ENCODE measurements at regions of chr12 and their contacts with region 1.

Region 1: DNA sequence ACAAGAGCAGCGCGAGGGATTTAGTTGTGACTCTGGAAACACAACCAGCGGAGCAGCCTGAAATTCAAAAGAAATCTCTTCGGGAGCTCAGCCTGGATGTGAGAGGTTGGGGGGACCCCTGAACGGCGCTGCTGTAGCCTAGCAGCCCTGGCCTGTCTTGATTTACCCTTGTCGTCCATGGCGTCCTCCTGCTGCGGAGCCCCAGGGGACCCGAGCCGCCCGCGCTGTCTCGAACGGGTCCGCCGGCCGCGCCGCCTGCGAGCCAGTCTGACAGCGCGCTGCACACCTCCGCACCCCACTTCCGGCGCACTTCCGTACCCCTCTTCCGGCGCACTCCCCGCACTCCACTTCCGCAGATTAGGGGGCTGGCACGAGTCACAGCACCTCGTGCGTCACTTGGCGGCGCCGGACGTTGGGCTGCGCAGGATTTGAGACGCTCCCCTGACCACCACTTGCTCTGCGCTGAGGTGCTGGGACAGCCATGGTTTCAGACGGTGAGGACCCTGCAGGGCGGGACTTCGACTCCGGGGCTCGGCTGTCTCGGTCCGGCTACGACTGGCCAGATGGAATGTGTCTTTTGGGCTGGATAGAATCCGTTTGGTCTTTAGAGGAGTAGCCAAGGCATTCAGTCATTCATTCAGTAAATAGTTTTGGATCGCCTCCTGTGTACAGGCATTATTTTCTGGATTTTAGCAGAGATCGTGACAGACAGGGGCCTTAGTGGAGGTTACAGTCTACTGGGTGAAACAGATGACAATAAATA is at the starts of genes EIF2B1 and GTF2H3:
- DNase-seq: peak; percentile 92 to 98 (median 95)
- ATAC-seq: peak; percentile 94
- H3K4me3 ChIP-seq: peak within 1 kb of the TSS; percentile 88
- H3K4me3 Mint-ChIP-seq: peak within 1 kb of the TSS; percentile 98
- H3K27ac ChIP-seq: peak within 1 kb of the TSS; percentile 81 to 92
- H3K27ac Mint-ChIP-seq: peak within 1 kb of the TSS; percentile 97
- H3K4me1 ChIP-seq: peaks cover 26% of the 10 kb centered on the region
- H3K4me1 Mint-ChIP-seq: peaks cover 23% of the 10 kb centered on the region
- H3K27me3 ChIP-seq: no peaks in the 10 kb centered on the region
- H3K27me3 Mint-ChIP-seq: no peaks in the 10 kb centered on the region
- CTCF ChIP-seq: no peak
- total RNA-seq, gene EIF2B1: 36.0 to 37.3 TPM
- total RNA-seq, gene GTF2H3: 12.3 to 12.9 TPM

Region 2: GRCh38 chr12:123601602-123602489 is 31.7 kb before region 1 on chr12 and contains the start of gene DDX55:
- CTCF ChIA-PET with region 1: no interaction called
- POLR2A ChIA-PET with region 1: interaction called, 20 read pairs
- intact Hi-C with region 1: loop called (anchors 1 kb)
- DNase-seq: peak; percentile 78 to 95 (median 84)
- ATAC-seq: peak; percentile 93
- H3K4me3 ChIP-seq: peak within 1 kb of the TSS; percentile 98
- H3K4me3 Mint-ChIP-seq: peak within 1 kb of the TSS; percentile 98
- H3K27ac ChIP-seq: peak within 1 kb of the TSS; percentile 85 to 89
- H3K27ac Mint-ChIP-seq: peak within 1 kb of the TSS; percentile 76
- H3K4me1 ChIP-seq: peaks cover 27% of the 10 kb centered on the region
- H3K4me1 Mint-ChIP-seq: peaks cover 33% of the 10 kb centered on the region
- H3K27me3 ChIP-seq: no peaks in the 10 kb centered on the region
- H3K27me3 Mint-ChIP-seq: no peaks in the 10 kb centered on the region
- CTCF ChIP-seq: peak; percentile 54
- total RNA-seq, gene DDX55: 33.3 to 37.1 TPM

Region 3: GRCh38 chr12:123670882-123671728 is 37.5 kb after region 1 on chr12 and contains the start of gene TCTN2:
- CTCF ChIA-PET with region 1: interaction called, 3 read pairs
- POLR2A ChIA-PET with region 1: no interaction called
- intact Hi-C with region 1: loop called in 1 of 2 experiments (anchors 2 kb)
- DNase-seq: peak; percentile 89 to 95 (median 92)
- ATAC-seq: peak; percentile 100
- H3K4me3 ChIP-seq: peak within 1 kb of the TSS; percentile 94
- H3K4me3 Mint-ChIP-seq: peak within 1 kb of the TSS; percentile 89
- H3K27ac ChIP-seq: no peak within 1 kb of the TSS
- H3K27ac Mint-ChIP-seq: peak within 1 kb of the TSS; percentile 69
- H3K4me1 ChIP-seq: peaks cover 18% of the 10 kb centered on the region
- H3K4me1 Mint-ChIP-seq: peaks cover 15% of the 10 kb centered on the region
- H3K27me3 ChIP-seq: no peaks in the 10 kb centered on the region
- H3K27me3 Mint-ChIP-seq: no peaks in the 10 kb centered on the region
- CTCF ChIP-seq: no peak
- total RNA-seq, gene TCTN2: 3.2 to 3.5 TPM

Region 4: GRCh38 chr12:123713398-123713797 is 79.8 kb after region 1 on chr12:
- CTCF ChIA-PET with region 1: no interaction called
- POLR2A ChIA-PET with region 1: interaction called, 3 read pairs
- intact Hi-C with region 1: loop called in 1 of 2 experiments (anchors 1 kb)
- DNase-seq: peak in 1 of 14 experiments; percentile 17
- ATAC-seq: no peak
- H3K4me3 ChIP-seq: peak overlapping the region; percentile 87
- H3K4me3 Mint-ChIP-seq: peak overlapping the region; percentile 85
- H3K27ac ChIP-seq: no peak overlapping the region
- H3K27ac Mint-ChIP-seq: peak overlapping the region; percentile 62
- H3K4me1 ChIP-seq: peaks cover 27% of the 10 kb centered on the region
- H3K4me1 Mint-ChIP-seq: peaks cover 38% of the 10 kb centered on the region
- H3K27me3 ChIP-seq: no peaks in the 10 kb centered on the region
- H3K27me3 Mint-ChIP-seq: no peaks in the 10 kb centered on the region
- CTCF ChIP-seq: no peak

Region 5: DNA sequence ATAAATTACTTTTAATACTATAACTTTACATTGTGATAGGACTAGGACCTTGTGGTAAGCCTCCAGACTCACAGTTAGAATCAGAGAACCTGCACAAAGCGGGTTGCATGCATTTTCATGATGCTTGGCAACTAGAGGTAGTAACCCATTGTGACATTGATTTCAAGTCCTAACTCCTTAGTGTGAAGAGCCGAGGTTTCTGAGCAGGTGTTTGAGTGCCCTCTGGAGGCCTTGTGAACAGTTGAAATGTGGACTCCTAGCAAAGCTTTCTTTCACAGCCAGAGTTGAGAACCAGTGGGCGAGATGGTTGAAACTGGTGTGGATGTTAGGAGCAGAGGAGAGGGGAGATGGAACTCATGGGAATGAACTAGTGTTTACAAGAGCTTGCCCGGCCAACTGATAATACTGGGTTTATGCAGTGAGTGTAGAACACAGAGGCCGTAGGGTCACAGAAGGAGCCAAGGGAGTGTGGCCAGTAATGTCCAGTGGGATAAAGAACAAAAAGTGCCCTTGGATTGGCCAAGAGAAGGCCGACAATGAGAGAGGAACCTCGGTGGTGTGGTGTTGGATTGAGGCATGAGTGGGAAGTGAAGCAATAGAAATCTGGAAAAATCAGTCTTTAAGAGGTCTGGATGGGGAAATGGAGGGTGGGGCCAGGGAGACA is 350.4 kb after region 1 on chr12:
- CTCF ChIA-PET with region 1: no interaction called
- POLR2A ChIA-PET with region 1: no interaction called
- intact Hi-C with region 1: loop called (anchors 2 to 10 kb)
- DNase-seq: peak; percentile 21 to 83 (median 39)
- ATAC-seq: peak; percentile 86
- H3K4me3 ChIP-seq: no peak overlapping the region
- H3K4me3 Mint-ChIP-seq: no peak overlapping the region
- H3K27ac ChIP-seq: no peak overlapping the region
- H3K27ac Mint-ChIP-seq: no peak overlapping the region
- H3K4me1 ChIP-seq: no peaks in the 10 kb centered on the region
- H3K4me1 Mint-ChIP-seq: peaks cover 5% of the 10 kb centered on the region
- H3K27me3 ChIP-seq: no peaks in the 10 kb centered on the region
- H3K27me3 Mint-ChIP-seq: no peaks in the 10 kb centered on the region
- CTCF ChIP-seq: peak; percentile 84